Mammary epithelial cell (primary cell): ENCODE measurements at regions of chr15 and their contacts with region 1.

Region 1: DNA sequence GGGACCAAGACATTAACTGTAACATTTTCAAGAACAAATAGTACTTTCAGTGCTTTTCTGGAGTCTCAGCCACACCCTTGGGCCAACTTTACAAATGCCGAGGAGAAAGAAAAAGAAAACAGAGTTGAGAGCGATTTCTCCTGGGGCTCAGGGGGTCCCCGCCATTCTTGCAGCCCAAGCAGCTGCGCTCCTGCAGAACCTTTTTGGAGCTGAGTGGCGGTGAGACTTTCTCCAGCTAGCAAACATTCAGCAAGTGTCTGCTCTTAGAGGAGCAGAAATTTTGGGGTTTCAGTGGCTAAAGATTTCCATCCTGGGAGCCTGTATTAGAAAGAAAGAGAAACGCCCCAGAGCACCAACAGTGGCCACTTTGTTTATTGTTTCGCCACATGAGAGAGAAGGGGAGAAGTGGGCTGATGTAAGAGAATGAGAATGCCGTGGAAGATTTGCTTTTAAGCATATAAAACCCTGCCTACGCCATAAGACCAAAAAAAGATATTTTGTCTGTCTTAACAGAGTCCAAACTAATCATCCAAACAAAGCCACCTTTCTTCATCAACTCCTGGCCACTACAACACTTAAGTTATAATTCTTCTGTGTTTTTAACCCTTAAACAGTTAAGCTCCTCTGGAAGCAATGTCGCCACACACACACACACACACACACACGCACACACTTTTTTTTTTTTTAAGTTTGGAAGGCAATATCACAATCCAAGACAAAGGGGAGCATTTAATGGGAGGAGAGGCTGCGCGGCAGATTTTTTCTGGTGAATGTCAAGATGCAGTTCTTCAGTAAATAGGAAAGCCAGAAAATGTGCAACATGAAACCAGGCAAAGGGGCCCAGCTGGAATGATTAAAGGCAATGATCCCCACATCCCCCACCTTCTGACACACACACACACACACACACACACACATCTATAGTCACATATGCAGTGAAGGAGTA is 19.2 kb downstream of the EID1 start:
- DNase-seq: peak; percentile 80
- H3K4me3 ChIP-seq: peak overlapping the region; percentile 17 to 65 (median 38)
- H3K27ac ChIP-seq: peak overlapping the region; percentile 76
- H3K4me1 ChIP-seq: peaks cover 19% of the 10 kb centered on the region
- H3K27me3 ChIP-seq: no peaks in the 10 kb centered on the region
- CTCF ChIP-seq: no peak

Region 2: DNA sequence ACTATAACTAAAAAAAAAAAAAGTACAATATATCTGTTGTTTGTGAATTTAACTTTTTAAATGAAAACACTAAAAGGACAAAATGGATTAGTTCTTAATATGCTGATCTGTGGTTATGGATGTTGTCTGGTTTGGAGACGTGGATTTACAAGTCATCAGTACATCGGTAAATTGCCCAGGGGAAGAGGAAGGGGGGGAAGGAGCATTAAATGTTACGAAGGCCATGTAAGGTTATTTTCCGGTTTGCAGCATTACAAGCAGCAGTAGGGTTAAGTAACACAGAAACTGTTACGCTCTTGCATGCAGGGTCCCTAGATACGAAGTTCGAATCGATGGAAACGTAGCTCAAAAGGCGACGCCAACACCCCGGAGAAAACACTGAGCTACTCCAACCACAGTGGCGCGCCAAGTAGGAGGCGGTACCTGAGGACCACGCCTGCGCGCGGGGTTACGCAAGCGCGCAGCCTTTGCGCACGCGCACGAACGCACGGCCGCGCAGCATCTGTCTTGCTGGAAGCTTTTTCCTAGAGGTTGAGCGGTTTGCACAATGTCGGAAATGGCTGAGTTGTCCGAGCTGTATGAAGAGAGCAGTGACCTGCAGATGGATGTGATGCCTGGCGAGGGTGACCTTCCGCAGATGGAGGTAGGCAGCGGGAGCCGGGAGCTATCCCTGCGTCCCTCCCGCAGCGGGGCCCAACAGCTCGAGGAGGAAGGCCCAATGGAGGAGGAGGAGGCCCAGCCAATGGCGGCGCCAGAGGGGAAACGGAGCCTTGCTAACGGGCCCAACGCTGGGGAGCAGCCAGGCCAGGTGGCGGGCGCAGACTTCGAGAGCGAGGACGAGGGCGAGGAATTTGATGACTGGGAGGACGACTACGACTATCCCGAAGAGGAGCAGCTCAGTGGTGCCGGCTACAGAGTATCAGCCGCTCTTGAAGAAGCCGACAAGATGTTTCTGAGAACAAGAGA is 19.2 kb before region 1 on chr15 and contains the start of gene EID1:
- CTCF ChIA-PET with region 1: no interaction called
- dilution Hi-C with region 1: no loop called
- in situ Hi-C with region 1: no loop called
- intact Hi-C with region 1: loop called (anchors 1 kb)
- DNase-seq: peak; percentile 95
- H3K4me3 ChIP-seq: peak within 1 kb of the TSS; percentile 47 to 96 (median 75)
- H3K27ac ChIP-seq: peak within 1 kb of the TSS; percentile 68
- H3K4me1 ChIP-seq: peaks cover 8% of the 10 kb centered on the region
- H3K27me3 ChIP-seq: no peaks in the 10 kb centered on the region
- CTCF ChIP-seq: no peak
- total RNA-seq, gene EID1: 84.6 to 147 TPM

Region 3: GRCh38 chr15:48925714-48926223 is 28.6 kb after region 1 on chr15:
- CTCF ChIA-PET with region 1: no interaction called
- dilution Hi-C with region 1: no loop called
- in situ Hi-C with region 1: no loop called
- intact Hi-C with region 1: loop called (anchors 5 kb)
- DNase-seq: peak; percentile 97
- H3K4me3 ChIP-seq: no peak overlapping the region
- H3K27ac ChIP-seq: peak overlapping the region; percentile 78
- H3K4me1 ChIP-seq: peaks cover 29% of the 10 kb centered on the region
- H3K27me3 ChIP-seq: no peaks in the 10 kb centered on the region
- CTCF ChIP-seq: no peak

Region 4: DNA sequence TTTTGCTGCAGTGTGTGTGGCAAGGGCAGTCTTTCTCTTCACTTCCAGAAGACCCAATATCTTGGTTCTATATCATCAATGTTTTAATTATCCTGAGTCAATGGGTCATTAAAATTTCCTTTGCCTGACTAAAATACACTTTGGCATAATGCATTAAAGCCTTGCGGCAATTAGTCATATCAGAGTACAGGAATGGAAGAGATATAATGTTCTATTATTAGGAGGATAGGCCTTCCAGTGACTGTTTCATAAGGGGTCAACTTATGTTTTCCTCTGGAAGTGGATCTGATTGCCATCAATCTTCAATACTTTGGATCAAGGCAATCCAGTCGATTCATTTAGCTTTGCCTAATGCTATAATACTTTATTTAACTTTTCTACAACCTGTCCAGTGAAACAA is 158.5 kb after region 1 on chr15:
- CTCF ChIA-PET with region 1: no interaction called
- dilution Hi-C with region 1: no loop called
- in situ Hi-C with region 1: no loop called
- intact Hi-C with region 1: no loop called
- DNase-seq: no peak
- H3K4me3 ChIP-seq: no peak overlapping the region
- H3K27ac ChIP-seq: no peak overlapping the region
- H3K4me1 ChIP-seq: no peaks in the 10 kb centered on the region
- H3K27me3 ChIP-seq: no peaks in the 10 kb centered on the region
- CTCF ChIP-seq: no peak